Panc1 (cell line): ENCODE measurements at regions of chr5 and their contacts with region 1.

Region 1: DNA sequence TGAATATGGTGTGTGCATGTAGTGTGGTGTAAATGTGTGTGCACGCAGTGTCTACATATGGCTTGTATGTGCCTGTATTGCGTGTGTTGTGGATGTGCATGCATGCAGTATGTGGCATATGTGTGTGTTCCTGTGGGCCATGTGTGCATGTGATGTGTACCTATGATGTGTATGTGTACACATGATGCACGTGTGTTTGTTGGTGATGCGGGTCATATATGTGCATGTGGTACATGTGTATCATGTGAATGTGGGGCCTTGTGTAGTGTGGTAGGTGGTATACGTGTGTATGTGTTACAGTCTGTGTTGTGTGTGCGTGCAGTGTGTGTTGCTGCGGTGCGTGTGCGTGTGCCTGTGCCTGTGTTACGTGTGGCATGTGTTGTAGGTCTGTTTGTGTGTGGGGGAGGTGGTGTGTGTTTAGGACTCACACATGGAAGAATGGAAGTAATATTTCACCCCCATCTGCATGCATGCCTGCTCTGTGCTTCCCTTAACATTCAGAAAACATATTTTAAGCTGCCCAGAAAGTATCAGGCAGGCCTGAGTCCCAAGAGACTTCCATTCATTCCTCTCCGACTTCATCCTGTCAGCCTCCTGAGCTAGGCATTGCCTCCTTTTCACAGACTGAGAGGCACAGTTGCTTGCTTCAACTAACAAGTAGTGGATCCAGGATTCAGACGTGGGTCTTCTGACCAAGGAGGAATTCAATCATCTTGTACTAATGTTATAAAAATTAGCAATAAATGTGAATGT is 55.4 kb upstream of the RUFY1 start:
- DNase-seq: no peak
- ATAC-seq: no peak
- H3K4me3 ChIP-seq: no peak overlapping the region
- H3K27ac ChIP-seq: no peak overlapping the region
- H3K4me1 ChIP-seq: no peaks in the 10 kb centered on the region
- H3K27me3 ChIP-seq: no peaks in the 10 kb centered on the region
- CTCF ChIP-seq: no peak

Region 2: DNA sequence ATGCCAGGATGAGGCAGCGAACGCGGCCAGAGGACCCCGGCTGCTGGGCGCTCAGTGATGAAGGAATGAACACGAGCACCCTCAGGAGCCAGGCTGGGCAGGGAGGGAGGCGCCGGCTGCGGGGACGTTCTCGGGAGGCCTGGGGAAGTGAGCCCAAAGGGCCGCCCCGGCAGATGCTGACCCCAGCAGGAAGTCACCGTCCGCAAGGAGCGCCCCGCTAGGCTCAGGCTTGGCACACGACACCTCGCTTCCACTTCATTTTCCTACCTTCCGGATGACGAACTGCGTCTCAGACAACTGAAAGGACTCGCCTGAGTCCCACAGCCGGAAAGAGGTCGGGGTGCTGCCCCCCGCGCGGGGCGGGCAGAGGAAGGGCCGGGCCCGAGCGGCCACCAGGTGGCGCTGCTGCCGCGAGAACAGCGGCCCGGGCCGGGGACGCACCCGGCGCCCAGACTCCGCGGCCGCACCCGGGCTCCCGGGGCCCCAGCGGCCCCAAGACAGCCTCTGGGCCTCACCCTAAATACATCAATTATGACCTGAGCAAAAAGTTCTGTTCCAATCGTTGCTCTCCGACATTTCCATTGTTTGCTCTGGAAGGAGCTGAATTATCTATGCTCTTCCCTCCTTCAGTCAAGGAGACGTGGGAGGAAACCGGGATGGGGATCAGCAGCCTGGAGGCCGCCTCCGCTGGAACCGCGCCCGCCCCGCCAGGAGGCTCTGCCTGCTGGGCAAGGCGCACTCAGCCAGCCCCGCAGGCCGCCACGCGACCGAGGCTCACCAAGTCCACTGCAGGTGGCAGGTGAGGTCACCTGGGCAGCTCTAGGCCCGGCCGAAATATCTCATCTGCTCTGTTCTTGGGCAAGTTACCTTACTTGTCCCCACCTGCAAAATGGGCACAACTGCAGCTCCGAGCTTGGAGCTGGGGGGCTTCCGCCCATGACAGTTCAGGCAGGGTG is 327.8 kb before region 1 on chr5:
- CTCF ChIA-PET with region 1: interaction called, 8 read pairs
- POLR2A ChIA-PET with region 1: no interaction called
- in situ Hi-C with region 1: no loop called
- intact Hi-C with region 1: loop called (anchors 5 kb)
- DNase-seq: no peak
- ATAC-seq: peak; percentile 87
- H3K4me3 ChIP-seq: no peak overlapping the region; a peak in 1 of 4 replicates
- H3K27ac ChIP-seq: no peak overlapping the region
- H3K4me1 ChIP-seq: no peaks in the 10 kb centered on the region
- H3K27me3 ChIP-seq: no peaks in the 10 kb centered on the region
- CTCF ChIP-seq: peak; percentile 98

Region 3: DNA sequence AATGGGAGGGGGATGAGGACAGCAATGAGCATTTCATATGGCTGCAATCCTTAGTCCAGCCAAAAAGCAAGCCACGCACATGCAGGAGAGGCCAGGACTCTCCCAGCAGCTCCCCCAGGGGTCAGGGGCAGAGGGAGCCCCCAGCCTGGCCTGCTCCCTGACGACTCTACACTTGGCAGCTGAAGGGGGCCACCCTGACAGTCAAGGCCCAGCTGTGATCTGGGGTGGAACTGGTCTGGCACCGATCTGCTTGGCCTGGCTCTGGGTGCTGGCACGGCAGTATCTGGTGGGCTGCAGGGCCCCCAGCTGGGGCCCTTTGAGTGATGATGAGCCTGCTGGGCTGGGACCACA is 267.7 kb before region 1 on chr5:
- CTCF ChIA-PET with region 1: no interaction called
- POLR2A ChIA-PET with region 1: no interaction called
- in situ Hi-C with region 1: no loop called
- intact Hi-C with region 1: no loop called
- DNase-seq: no peak
- ATAC-seq: no peak
- H3K4me3 ChIP-seq: no peak overlapping the region
- H3K27ac ChIP-seq: no peak overlapping the region
- H3K4me1 ChIP-seq: no peaks in the 10 kb centered on the region
- H3K27me3 ChIP-seq: no peaks in the 10 kb centered on the region; the same call in 1 of the 2 replicates
- CTCF ChIP-seq: no peak

Region 4: GRCh38 chr5:180126726-180127681 is 632.1 kb after region 1 on chr5:
- CTCF ChIA-PET with region 1: no interaction called
- POLR2A ChIA-PET with region 1: no interaction called
- in situ Hi-C with region 1: no loop called
- intact Hi-C with region 1: no loop called
- DNase-seq: no peak
- ATAC-seq: peak; percentile 77
- H3K4me3 ChIP-seq: peak overlapping the region; percentile 2 to 25; a peak in 3 of 4 replicates
- H3K27ac ChIP-seq: no peak overlapping the region
- H3K4me1 ChIP-seq: peaks cover 7% of the 10 kb centered on the region
- H3K27me3 ChIP-seq: peaks cover 9% of the 10 kb centered on the region
- CTCF ChIP-seq: peak; percentile 98